ENCODE measurements at regions of chr18 and their contacts with region 1.

Region 1: DNA sequence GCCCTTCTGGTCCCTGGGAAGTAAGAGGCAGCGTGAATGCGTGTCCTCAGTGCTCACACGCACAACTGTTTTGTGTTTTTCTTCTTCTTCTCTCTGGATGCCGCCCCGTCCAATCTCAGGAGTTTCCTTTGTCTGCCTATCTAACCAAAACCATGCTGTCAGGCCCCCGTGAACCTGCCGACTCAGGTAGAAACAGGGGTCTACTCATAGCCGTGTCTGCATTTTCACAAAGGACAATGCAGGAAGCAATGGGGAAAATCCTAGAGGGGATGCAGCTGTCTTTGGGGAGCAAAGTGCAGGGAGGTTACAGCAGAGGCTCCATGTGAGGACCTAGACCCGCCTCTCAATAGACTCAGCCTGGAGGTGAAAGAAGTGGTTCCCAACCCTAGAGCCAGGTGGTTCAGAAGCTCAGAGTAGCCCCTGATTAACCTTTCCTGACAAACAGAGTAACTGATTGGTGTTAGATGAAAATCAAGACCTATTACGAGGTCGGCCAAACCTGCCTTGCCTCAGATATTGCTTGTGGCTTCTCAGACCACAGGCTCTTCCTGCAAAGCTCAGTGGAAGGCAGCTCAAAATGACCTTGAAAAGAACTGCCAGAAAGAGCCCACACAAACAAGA is 49.3 kb downstream of the CD226 start:
- DNase-seq: peak in 6 of 9 donors; percentile 13 to 37 (median 20)
- ATAC-seq: peak; percentile 38
- H3K4me3 ChIP-seq: peak overlapping the region; percentile 52
- H3K4me3 Mint-ChIP-seq: peak overlapping the region; percentile 68 to 93 (median 84)
- H3K27ac ChIP-seq: peak overlapping the region; percentile 38
- H3K27ac Mint-ChIP-seq: peak overlapping the region; percentile 69 to 97 (median 90)
- H3K4me1 ChIP-seq: peaks cover 22 to 38% of the 10 kb centered on the region in 2 donors
- H3K4me1 Mint-ChIP-seq: peaks cover 49 to 76% (median 68%) of the 10 kb centered on the region in 7 donors
- H3K27me3 ChIP-seq: no peaks in the 10 kb centered on the region
- H3K27me3 Mint-ChIP-seq: no peaks in the 10 kb centered on the region

Region 2: DNA sequence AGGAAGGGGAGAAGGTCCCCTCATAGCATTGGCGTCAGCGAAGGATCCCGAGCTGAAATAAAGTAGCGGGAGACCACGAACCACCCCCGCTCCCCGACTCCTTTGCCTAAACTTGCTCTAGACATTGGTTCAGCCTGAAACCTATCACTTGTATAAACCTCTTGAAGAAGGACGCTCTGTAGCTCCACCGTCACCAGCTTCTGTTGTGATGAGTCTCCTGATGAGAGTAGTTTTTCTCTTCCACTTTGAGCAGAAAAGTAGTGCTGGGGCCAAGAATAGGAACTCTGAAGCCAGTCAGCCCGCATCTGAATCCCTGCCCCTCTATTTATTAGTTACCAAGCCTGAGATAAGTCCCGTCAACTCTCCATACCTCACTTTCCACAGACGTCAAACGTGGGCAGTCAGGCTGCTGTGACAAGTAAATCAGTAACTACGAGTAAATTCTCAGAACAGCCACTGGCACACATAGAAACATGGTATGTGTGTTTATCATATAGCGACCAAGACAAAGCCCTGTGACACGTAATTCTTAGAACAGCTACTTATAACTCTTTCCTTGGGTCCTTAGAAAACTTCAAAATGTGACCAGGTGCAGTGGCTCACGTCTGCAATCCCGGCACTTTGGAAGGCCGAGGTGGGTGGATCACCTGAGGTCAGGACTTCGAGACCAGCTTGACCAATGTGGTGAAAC is 12.4 kb before region 1 on chr18:
- CTCF ChIA-PET with region 1: no interaction called
- POLR2A ChIA-PET with region 1: interaction called, 3 read pairs
- intact Hi-C with region 1: loop called (anchors 1 kb)
- DNase-seq: peak in 1 of 9 donors; percentile 50
- ATAC-seq: peak; percentile 32
- H3K4me3 ChIP-seq: no peak overlapping the region
- H3K4me3 Mint-ChIP-seq: peak overlapping the region in 2 of 10 donors; percentile 36 to 89
- H3K27ac ChIP-seq: no peak overlapping the region
- H3K27ac Mint-ChIP-seq: peak overlapping the region in 6 of 9 donors; percentile 5 to 99 (median 62)
- H3K4me1 ChIP-seq: peaks cover 4 to 28% of the 10 kb centered on the region in 2 donors
- H3K4me1 Mint-ChIP-seq: peaks cover 38 to 81% (median 73%) of the 10 kb centered on the region in 7 donors
- H3K27me3 ChIP-seq: no peaks in the 10 kb centered on the region
- H3K27me3 Mint-ChIP-seq: no peaks in the 10 kb centered on the region

Region 3: DNA sequence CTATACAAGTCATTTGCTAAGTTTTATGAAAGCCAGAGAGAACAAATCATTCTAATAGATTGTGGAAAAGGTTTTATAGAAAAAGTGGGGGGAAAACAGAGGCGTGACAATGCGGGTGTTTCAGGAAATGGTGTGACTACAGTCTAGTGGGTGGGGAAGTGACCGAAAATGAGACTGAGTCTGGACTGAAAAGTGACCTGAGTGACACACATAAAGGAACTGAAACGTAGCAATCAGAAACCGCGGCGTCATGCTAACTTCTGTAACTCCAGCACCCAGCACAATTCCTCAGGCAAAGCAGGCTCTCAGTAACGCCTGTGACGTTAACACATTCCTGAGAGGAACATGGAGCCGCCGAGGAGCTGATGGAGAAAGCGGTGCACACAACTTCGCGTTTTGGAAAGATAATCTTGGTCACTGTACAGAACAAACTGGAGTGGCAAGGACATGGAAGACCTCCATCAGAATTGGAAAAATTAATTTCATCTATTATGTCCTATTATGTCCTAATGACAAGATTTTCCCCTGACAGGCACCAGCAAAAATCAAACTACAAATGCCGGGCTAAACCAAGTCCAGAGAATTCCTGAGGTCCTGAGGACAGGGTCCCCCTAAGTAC is 50.7 kb after region 1 on chr18:
- CTCF ChIA-PET with region 1: no interaction called
- POLR2A ChIA-PET with region 1: interaction called, 6 read pairs
- intact Hi-C with region 1: loop called (anchors 1 kb)
- DNase-seq: peak in 1 of 9 donors; percentile 53
- ATAC-seq: peak; percentile 73
- H3K4me3 ChIP-seq: peak overlapping the region; percentile 0
- H3K4me3 Mint-ChIP-seq: no peak overlapping the region
- H3K27ac ChIP-seq: peak overlapping the region; percentile 55
- H3K27ac Mint-ChIP-seq: no peak overlapping the region
- H3K4me1 ChIP-seq: peaks cover 45 to 77% of the 10 kb centered on the region in 2 donors
- H3K4me1 Mint-ChIP-seq: peaks cover 12 to 63% (median 42%) of the 10 kb centered on the region in 7 donors
- H3K27me3 ChIP-seq: no peaks in the 10 kb centered on the region
- H3K27me3 Mint-ChIP-seq: no peaks in the 10 kb centered on the region

Region 4: GRCh38 chr18:70072678-70073077 is 174.3 kb after region 1 on chr18:
- CTCF ChIA-PET with region 1: no interaction called
- POLR2A ChIA-PET with region 1: no interaction called
- intact Hi-C with region 1: loop called in 1 of 2 experiments (anchors 5 kb)
- DNase-seq: peak in 3 of 9 donors; percentile 3 to 35 (median 3)
- ATAC-seq: no peak
- H3K4me3 ChIP-seq: no peak overlapping the region
- H3K4me3 Mint-ChIP-seq: no peak overlapping the region
- H3K27ac ChIP-seq: no peak overlapping the region
- H3K27ac Mint-ChIP-seq: no peak overlapping the region
- H3K4me1 ChIP-seq: no peaks in the 10 kb centered on the region
- H3K4me1 Mint-ChIP-seq: peaks cover 0 to 6% (median 4%) of the 10 kb centered on the region in 7 donors
- H3K27me3 ChIP-seq: no peaks in the 10 kb centered on the region
- H3K27me3 Mint-ChIP-seq: no peaks in the 10 kb centered on the region

Region 5: DNA sequence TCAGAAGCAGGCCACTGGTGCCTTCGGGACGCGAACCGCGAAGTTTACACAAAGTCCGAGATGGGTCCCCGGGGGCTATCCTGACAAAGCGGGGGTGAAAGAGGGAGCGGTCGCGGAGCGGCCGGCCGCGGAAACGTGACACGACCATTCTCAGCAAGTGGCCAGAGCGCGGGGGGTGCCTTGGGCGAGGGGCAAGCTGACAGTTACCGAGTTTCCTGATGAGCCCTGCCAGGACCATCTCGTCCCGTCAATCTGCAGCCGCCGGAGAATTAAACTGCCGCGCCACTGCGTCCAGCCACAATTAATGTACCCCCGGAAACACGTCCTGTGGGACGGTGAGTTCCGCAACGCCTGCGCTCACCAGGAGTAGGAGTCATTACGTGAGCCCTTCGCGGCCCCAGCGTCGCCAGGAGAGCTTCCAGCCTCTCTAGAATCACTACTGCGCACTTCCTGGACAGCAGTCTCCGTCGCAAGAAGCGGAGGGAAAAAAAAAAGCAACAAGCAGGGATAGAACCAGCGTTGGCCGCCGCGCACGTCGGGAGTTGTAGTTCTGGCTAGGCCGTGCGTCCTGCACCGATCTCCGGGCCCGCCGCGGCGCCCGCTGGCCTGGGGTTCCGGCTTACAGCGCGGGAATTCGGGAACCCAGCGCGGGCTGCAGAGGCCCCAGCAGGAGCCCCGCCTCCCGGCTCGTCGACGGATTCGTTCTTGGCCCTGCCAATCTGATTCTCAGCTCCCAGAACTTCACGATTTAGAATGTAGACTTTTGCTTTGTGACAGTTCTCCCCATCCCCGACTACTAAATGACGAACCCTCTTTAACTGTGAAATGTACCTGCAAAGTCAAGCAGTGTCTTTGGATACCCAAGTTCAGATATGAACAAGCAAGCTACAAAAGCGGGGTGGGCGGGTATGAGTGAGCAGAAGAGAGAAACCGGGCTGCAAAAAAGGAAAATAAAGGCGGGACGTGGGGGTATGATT is 307.4 kb after region 1 on chr18 and contains the start of gene RTTN:
- CTCF ChIA-PET with region 1: no interaction called
- POLR2A ChIA-PET with region 1: no interaction called
- intact Hi-C with region 1: loop called in 1 of 2 experiments (anchors 10 kb)
- DNase-seq: peak; percentile 88 to 95 (median 92)
- ATAC-seq: peak; percentile 96
- H3K4me3 ChIP-seq: peak within 1 kb of the TSS; percentile 91
- H3K4me3 Mint-ChIP-seq: peak within 1 kb of the TSS; percentile 90 to 99 (median 97)
- H3K27ac ChIP-seq: peak within 1 kb of the TSS; percentile 87
- H3K27ac Mint-ChIP-seq: peak within 1 kb of the TSS; percentile 97 to 100 (median 99)
- H3K4me1 ChIP-seq: peaks cover 5 to 9% of the 10 kb centered on the region in 2 donors
- H3K4me1 Mint-ChIP-seq: peaks cover 8 to 42% (median 34%) of the 10 kb centered on the region in 7 donors
- H3K27me3 ChIP-seq: no peaks in the 10 kb centered on the region
- H3K27me3 Mint-ChIP-seq: peaks cover 0 to 11% (median 0%) of the 10 kb centered on the region in 5 donors
- total RNA-seq, gene RTTN: 26.8 to 33.2 (median 28.2) TPM